ENCODE measurements at regions of chr11 and their contacts with region 1.

Region 1: DNA sequence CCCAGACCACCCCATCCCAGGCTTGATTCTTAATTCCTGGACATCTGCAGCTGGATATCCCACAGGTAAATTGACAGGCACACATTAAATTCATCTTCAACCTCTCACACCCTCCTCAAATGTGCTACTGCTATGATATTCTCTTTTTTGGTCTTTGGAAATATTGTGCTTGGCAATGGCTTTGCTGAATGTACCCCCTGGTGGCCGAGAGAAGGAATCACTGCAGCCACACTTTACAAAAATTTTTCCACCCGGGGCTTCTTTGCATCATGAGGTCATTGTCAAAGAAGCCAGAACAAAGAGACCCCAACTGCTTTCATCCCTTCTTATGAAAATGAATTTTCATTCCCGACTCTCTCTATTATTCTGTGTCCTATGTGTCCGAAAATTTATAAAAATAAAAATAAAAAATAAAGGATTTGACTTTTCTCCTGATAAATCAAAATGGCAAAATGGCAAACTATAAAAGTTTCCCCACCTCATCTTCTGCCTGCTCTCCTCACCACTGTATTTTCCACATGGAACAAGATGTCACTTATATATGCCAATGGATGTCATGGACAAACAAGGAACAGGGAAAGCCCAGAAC is 15.0 kb upstream of the CYB5R2 start:
- DNase-seq: peak in 2 of 9 experiments; percentile 31 to 50
- ATAC-seq: no peak
- H3K4me3 ChIP-seq: no peak overlapping the region
- H3K4me3 Mint-ChIP-seq: no peak overlapping the region
- H3K27ac ChIP-seq: no peak overlapping the region
- H3K27ac Mint-ChIP-seq: no peak overlapping the region
- H3K4me1 ChIP-seq: no peaks in the 10 kb centered on the region
- H3K4me1 Mint-ChIP-seq: no peaks in the 10 kb centered on the region
- H3K27me3 ChIP-seq: peaks cover 2 to 5% of the 10 kb centered on the region in 2 experiments
- H3K27me3 Mint-ChIP-seq: peaks cover 26% of the 10 kb centered on the region
- CTCF ChIP-seq: peak; percentile 81

Region 2: GRCh38 chr11:6531267-6531752 is 1157.0 kb before region 1 on chr11:
- CTCF ChIA-PET with region 1: no interaction called
- POLR2A ChIA-PET with region 1: no interaction called
- intact Hi-C with region 1: loop called in 1 of 2 experiments (anchors 10 kb)
- DNase-seq: peak in 3 of 9 experiments; percentile 14 to 68 (median 56)
- ATAC-seq: peak; percentile 83
- H3K4me3 ChIP-seq: no peak overlapping the region
- H3K4me3 Mint-ChIP-seq: no peak overlapping the region
- H3K27ac ChIP-seq: no peak overlapping the region
- H3K27ac Mint-ChIP-seq: no peak overlapping the region
- H3K4me1 ChIP-seq: peaks cover 4% of the 10 kb centered on the region
- H3K4me1 Mint-ChIP-seq: peaks cover 7% of the 10 kb centered on the region
- H3K27me3 ChIP-seq: no peaks in the 10 kb centered on the region
- H3K27me3 Mint-ChIP-seq: no peaks in the 10 kb centered on the region
- CTCF ChIP-seq: peak; percentile 84

Region 3: GRCh38 chr11:6812390-6813005 is 875.8 kb before region 1 on chr11:
- CTCF ChIA-PET with region 1: no interaction called
- POLR2A ChIA-PET with region 1: no interaction called
- intact Hi-C with region 1: loop called in 1 of 2 experiments (anchors 5 kb)
- DNase-seq: peak in 8 of 9 experiments; percentile 3 to 63 (median 24)
- ATAC-seq: peak; percentile 96
- H3K4me3 ChIP-seq: no peak overlapping the region
- H3K4me3 Mint-ChIP-seq: no peak overlapping the region
- H3K27ac ChIP-seq: no peak overlapping the region
- H3K27ac Mint-ChIP-seq: no peak overlapping the region
- H3K4me1 ChIP-seq: no peaks in the 10 kb centered on the region
- H3K4me1 Mint-ChIP-seq: no peaks in the 10 kb centered on the region
- H3K27me3 ChIP-seq: no peaks in the 10 kb centered on the region
- H3K27me3 Mint-ChIP-seq: peaks cover 30% of the 10 kb centered on the region
- CTCF ChIP-seq: peak; percentile 92

Region 4: GRCh38 chr11:7098235-7098832 is 590.0 kb before region 1 on chr11:
- CTCF ChIA-PET with region 1: interaction called, 12 read pairs
- POLR2A ChIA-PET with region 1: no interaction called
- intact Hi-C with region 1: loop called in 1 of 2 experiments (anchors 1 kb)
- DNase-seq: peak in 2 of 9 experiments; percentile 53 to 69
- ATAC-seq: no peak
- H3K4me3 ChIP-seq: no peak overlapping the region
- H3K4me3 Mint-ChIP-seq: no peak overlapping the region
- H3K27ac ChIP-seq: no peak overlapping the region
- H3K27ac Mint-ChIP-seq: no peak overlapping the region
- H3K4me1 ChIP-seq: no peaks in the 10 kb centered on the region
- H3K4me1 Mint-ChIP-seq: no peaks in the 10 kb centered on the region
- H3K27me3 ChIP-seq: no peaks in the 10 kb centered on the region
- H3K27me3 Mint-ChIP-seq: peaks cover 11% of the 10 kb centered on the region
- CTCF ChIP-seq: peak; percentile 63

Region 5: GRCh38 chr11:7457211-7457610 is 231.1 kb before region 1 on chr11:
- CTCF ChIA-PET with region 1: no interaction called
- POLR2A ChIA-PET with region 1: no interaction called
- intact Hi-C with region 1: no loop called
- DNase-seq: no peak
- ATAC-seq: no peak
- H3K4me3 ChIP-seq: no peak overlapping the region
- H3K4me3 Mint-ChIP-seq: no peak overlapping the region
- H3K27ac ChIP-seq: no peak overlapping the region
- H3K27ac Mint-ChIP-seq: no peak overlapping the region
- H3K4me1 ChIP-seq: no peaks in the 10 kb centered on the region
- H3K4me1 Mint-ChIP-seq: peaks cover under 1% of the 10 kb centered on the region
- H3K27me3 ChIP-seq: peaks cover 0 to 2% of the 10 kb centered on the region in 2 experiments
- H3K27me3 Mint-ChIP-seq: no peaks in the 10 kb centered on the region
- CTCF ChIP-seq: no peak

Measured in CD8-positive, alpha-beta T cell (primary cell).